Activated CD4-positive, alpha-beta T cell treated with anti-CD3 and anti-CD28 coated beads for 36 hours (primary cell): ENCODE measurements at regions of chr18 and their contacts with region 1.

Region 1: GRCh38 chr18:9069601-9070000 is 32.9 kb upstream of the NDUFV2 start:
- DNase-seq: no peak
- ATAC-seq: no peak
- H3K4me3 Mint-ChIP-seq: no peak overlapping the region
- H3K27ac Mint-ChIP-seq: peak overlapping the region; percentile 40
- H3K4me1 Mint-ChIP-seq: peaks cover 21% of the 10 kb centered on the region
- H3K27me3 Mint-ChIP-seq: no peaks in the 10 kb centered on the region

Region 2: GRCh38 chr18:8813611-8814010 is 256.0 kb before region 1 on chr18:
- CTCF ChIA-PET with region 1: no interaction called
- POLR2A ChIA-PET with region 1: no interaction called
- intact Hi-C with region 1: no loop called
- DNase-seq: no peak
- ATAC-seq: no peak
- H3K4me3 Mint-ChIP-seq: no peak overlapping the region
- H3K27ac Mint-ChIP-seq: no peak overlapping the region
- H3K4me1 Mint-ChIP-seq: peaks cover 4% of the 10 kb centered on the region
- H3K27me3 Mint-ChIP-seq: no peaks in the 10 kb centered on the region

Region 3: GRCh38 chr18:9082711-9083510 is 13.3 kb after region 1 on chr18:
- CTCF ChIA-PET with region 1: interaction called, 20 read pairs
- POLR2A ChIA-PET with region 1: interaction called, 9 read pairs
- intact Hi-C with region 1: no loop called
- DNase-seq: peak; percentile 80
- ATAC-seq: peak; percentile 91
- H3K4me3 Mint-ChIP-seq: peak overlapping the region; percentile 62
- H3K27ac Mint-ChIP-seq: peak overlapping the region; percentile 96
- H3K4me1 Mint-ChIP-seq: peaks cover 41% of the 10 kb centered on the region
- H3K27me3 Mint-ChIP-seq: no peaks in the 10 kb centered on the region

Region 4: GRCh38 chr18:9109523-9109922 is 39.9 kb after region 1 on chr18:
- CTCF ChIA-PET with region 1: interaction called, 7 read pairs
- POLR2A ChIA-PET with region 1: no interaction called
- intact Hi-C with region 1: loop called in 1 of 2 experiments (anchors 2 kb)
- DNase-seq: no peak
- ATAC-seq: peak; percentile 58
- H3K4me3 Mint-ChIP-seq: peak overlapping the region; percentile 55
- H3K27ac Mint-ChIP-seq: peak overlapping the region; percentile 77
- H3K4me1 Mint-ChIP-seq: peaks cover 87% of the 10 kb centered on the region
- H3K27me3 Mint-ChIP-seq: no peaks in the 10 kb centered on the region

Region 5: GRCh38 chr18:9147440-9148202 is 78.0 kb after region 1 on chr18:
- CTCF ChIA-PET with region 1: interaction called, 25 read pairs
- POLR2A ChIA-PET with region 1: interaction called, 5 read pairs
- intact Hi-C with region 1: loop called (anchors 1 kb)
- DNase-seq: peak; percentile 33
- ATAC-seq: peak; percentile 59
- H3K4me3 Mint-ChIP-seq: peak overlapping the region; percentile 49
- H3K27ac Mint-ChIP-seq: peak overlapping the region; percentile 93
- H3K4me1 Mint-ChIP-seq: peaks cover 77% of the 10 kb centered on the region
- H3K27me3 Mint-ChIP-seq: no peaks in the 10 kb centered on the region

Region 6: DNA sequence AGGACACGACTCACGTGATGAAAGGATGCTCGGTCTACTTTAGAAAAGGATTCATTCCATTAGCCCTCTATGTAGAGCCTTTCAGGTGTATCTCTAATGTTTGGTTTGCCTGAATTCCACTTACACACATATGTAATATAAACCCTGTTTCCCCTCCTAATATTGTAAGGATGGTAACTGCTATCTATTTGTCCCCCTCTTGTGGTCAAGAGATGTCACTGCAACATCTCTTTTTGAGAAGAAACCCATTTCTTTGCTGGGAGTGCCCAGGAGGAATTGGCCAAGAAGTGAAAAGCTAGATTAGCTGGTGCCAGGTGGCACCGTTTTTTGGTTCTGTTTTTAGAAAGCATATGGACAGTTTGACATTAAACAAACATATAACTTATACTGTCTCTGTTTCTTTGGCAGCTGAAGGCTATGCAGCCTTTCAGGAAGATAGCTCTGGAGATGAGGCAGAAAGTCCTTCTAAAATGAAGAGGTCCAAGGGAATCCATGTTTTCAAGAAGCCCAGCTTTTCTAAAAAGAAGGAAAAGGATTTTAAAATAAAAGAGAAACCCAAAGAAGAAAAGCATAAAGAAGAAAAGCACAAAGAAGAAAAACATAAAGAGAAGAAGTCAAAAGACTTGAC is 446.9 kb after region 1 on chr18:
- CTCF ChIA-PET with region 1: interaction called, 12 read pairs
- POLR2A ChIA-PET with region 1: no interaction called
- intact Hi-C with region 1: loop called (anchors 1 to 5 kb)
- DNase-seq: peak; percentile 10
- ATAC-seq: peak; percentile 47
- H3K4me3 Mint-ChIP-seq: no peak overlapping the region
- H3K27ac Mint-ChIP-seq: no peak overlapping the region
- H3K4me1 Mint-ChIP-seq: peaks cover 2% of the 10 kb centered on the region
- H3K27me3 Mint-ChIP-seq: no peaks in the 10 kb centered on the region